Activated CD8-positive, alpha-beta T cell treated with anti-CD3 and anti-CD28 coated beads for 36 hours (primary cell): ENCODE measurements at regions of chr1 and their contacts with region 1.

Region 1: GRCh38 chr1:161531986-161532643 is 7.8 kb downstream of the HSPA6 start:
- DNase-seq: no peak
- ATAC-seq: no peak
- H3K4me3 Mint-ChIP-seq: no peak overlapping the region
- H3K27ac Mint-ChIP-seq: no peak overlapping the region
- H3K4me1 Mint-ChIP-seq: peaks cover 13% of the 10 kb centered on the region
- H3K27me3 Mint-ChIP-seq: peaks cover 3% of the 10 kb centered on the region
- CTCF ChIP-seq: no peak

Region 2: DNA sequence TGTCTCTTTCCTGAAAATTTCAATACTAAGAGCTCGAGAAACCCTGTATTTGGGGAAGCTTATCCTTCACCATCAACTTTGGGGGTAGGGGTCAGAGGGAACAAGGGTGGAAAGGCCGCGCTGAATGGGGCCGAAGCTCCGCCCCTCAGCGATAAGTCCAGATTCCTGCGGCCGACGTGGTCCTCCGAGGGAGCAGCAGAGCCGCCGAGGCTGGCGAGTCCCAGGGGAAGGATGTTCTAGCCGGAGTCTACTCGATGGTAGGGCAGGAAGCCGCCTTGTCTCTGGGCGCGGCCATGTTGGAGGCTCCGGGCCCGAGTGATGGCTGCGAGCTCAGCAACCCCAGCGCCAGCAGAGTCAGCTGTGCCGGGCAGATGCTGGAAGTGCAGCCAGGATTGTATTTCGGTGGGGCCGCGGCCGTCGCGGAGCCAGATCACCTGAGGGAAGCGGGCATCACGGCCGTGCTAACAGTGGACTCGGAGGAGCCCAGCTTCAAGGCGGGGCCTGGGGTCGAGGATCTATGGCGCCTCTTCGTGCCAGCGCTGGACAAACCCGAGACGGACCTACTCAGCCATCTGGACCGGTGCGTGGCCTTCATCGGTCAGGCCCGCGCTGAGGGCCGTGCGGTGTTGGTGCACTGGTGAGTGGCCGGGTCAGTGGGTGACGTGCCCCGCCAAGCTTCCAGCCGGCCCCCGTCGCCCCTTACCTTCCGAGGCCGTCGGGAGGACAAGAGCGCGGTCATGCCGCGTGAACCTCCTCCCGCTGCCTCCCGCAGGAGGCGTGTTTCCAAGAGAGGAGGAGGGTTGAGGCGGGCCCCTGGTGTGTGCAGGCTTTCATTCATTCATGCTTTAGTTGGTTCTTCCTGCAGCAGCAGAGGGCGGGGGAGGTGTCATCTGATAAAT is 217.6 kb after region 1 on chr1 and contains the start of gene DUSP12:
- CTCF ChIA-PET with region 1: no interaction called
- POLR2A ChIA-PET with region 1: interaction called, 4 read pairs
- intact Hi-C with region 1: loop called (anchors 10 kb)
- DNase-seq: peak; percentile 93
- ATAC-seq: peak; percentile 96
- H3K4me3 Mint-ChIP-seq: peak within 1 kb of the TSS; percentile 100
- H3K27ac Mint-ChIP-seq: peak within 1 kb of the TSS; percentile 99
- H3K4me1 Mint-ChIP-seq: peaks cover 42% of the 10 kb centered on the region
- H3K27me3 Mint-ChIP-seq: peaks cover 3% of the 10 kb centered on the region
- CTCF ChIP-seq: peak; percentile 12
- total RNA-seq, gene DUSP12: 25.3 to 25.4 TPM